ENCODE measurements at regions of chr18 and their contacts with region 1.

Region 1: DNA sequence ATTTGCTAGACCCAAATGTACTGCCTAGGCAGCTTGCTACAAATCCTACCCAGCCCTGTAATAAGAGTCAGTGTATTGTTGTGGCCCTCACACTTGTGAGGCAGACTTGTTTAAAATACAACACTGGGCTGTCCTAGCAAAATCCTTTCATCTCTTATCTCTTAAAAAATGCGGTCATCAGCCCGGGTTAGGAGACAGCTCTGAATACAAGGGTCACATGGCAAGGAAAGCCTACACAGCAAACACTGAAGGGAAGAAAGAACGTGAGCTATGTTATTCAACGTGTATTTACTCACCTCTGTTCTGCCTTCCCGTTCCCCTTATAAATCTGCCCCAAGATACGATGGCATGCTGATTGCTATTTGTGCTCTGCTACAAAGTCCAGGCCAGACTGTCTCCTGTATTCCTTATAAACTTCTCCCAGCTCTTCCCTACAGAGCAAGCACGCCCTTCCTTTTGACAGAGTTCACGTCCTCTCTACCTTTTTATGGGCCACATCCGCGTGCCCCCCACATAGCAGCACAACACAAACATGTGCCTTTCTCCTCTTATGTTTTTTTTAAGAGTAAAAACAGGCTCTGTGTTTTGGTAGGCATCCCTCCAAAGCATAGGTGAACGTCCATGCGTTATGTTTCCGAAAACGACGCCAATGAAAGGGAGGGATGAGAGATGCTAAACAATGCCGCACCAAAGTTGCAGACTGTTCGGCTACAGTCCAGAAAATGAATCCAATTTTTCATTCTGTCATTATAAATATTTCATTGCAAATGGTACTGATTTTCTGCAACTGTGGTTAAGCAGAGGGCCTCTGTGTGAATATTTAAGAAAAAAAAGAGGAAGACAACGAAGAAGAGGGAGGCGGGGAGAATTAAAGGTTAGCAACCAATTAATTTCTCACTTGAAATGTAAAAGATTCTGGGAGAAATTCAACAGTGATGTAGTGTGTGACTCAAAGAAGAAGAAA is 274.7 kb downstream of the ZNF521 start:
- DNase-seq: no peak
- ATAC-seq: peak in 2 of 4 donors; percentile 33 to 34
- H3K4me3 ChIP-seq: no peak overlapping the region
- H3K27ac ChIP-seq: no peak overlapping the region
- H3K4me1 ChIP-seq: no peaks in the 10 kb centered on the region
- H3K27me3 ChIP-seq: no peaks in the 10 kb centered on the region
- CTCF ChIP-seq: no peak
- POLR2A ChIP-seq: no peak

Region 2: GRCh38 chr18:24885276-24885675 is 192.0 kb before region 1 on chr18:
- intact Hi-C with region 1: loop called in 1 of 10 experiments (anchors 10 kb)
- DNase-seq: no peak
- ATAC-seq: no peak
- H3K4me3 ChIP-seq: no peak overlapping the region
- H3K27ac ChIP-seq: no peak overlapping the region
- H3K4me1 ChIP-seq: peaks cover 0 to 4% (median 0%) of the 10 kb centered on the region in 12 donors
- H3K27me3 ChIP-seq: no peaks in the 10 kb centered on the region
- CTCF ChIP-seq: no peak
- POLR2A ChIP-seq: no peak

Region 3: GRCh38 chr18:25042641-25043051 is 34.6 kb before region 1 on chr18:
- intact Hi-C with region 1: loop called in 1 of 10 experiments (anchors 10 kb)
- DNase-seq: no peak
- ATAC-seq: peak in 2 of 4 donors; percentile 36 to 60
- H3K4me3 ChIP-seq: no peak overlapping the region
- H3K27ac ChIP-seq: no peak overlapping the region
- H3K4me1 ChIP-seq: peaks cover 0 to 10% (median 0%) of the 10 kb centered on the region in 12 donors
- H3K27me3 ChIP-seq: no peaks in the 10 kb centered on the region
- CTCF ChIP-seq: no peak
- POLR2A ChIP-seq: no peak